ENCODE measurements at regions of chrX and their contacts with region 1.

Region 1: DNA sequence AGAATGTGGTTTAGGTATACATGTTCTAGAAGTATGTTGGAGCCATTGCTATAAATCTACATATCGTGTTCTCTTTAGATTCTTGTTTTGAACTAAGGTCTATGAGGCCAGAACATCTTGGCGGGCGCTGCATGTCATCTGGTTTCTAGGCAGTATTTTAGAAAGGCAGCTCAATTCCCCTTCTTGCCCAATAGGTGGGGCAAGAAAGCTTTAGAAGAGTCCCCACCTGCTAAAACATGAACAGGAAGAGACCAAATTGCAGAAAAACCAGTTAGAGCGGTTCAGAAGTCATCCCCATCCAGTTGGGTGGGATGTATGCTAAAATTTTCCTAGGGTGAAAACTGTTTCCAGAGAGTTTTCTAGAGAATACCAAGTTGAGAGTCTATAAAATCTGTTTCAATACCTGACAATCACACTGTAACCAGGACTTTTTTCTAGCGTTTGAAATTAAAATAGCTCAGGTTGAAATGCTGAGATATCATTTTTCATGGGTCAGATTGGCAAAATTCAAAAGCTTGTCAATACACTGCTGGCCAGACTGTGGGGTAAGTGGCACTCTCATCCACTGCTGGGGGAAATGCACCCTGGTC is 17.5 kb upstream of the SH3KBP1 start:
- DNase-seq: peak; percentile 46
- ATAC-seq: peak; percentile 80
- H3K4me3 Mint-ChIP-seq: no peak overlapping the region
- H3K27ac Mint-ChIP-seq: no peak overlapping the region
- H3K4me1 Mint-ChIP-seq: peaks cover 10% of the 10 kb centered on the region
- H3K27me3 Mint-ChIP-seq: no peaks in the 10 kb centered on the region

Region 2: DNA sequence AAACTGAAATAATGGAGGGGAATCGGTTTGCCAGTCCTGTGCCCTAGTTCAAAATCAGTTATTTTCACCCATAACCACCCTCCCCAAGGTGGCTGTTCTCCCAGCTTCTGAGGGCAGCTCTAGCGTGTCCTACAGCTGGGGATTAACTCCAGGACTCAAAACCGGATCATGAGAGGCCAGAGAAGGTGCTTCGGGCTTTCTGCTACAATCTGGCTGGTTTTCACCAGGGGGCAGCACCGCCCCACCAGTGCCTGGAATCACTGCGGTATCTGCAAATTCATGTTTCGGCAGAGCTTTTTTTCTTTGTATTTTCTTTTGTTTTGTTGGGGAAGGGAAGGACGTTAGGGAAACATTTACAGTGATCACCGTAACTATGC is 532.7 kb before region 1 on chrX:
- CTCF ChIA-PET with region 1: no interaction called
- POLR2A ChIA-PET with region 1: no interaction called
- intact Hi-C with region 1: loop called in 1 of 2 experiments (anchors 5 kb)
- DNase-seq: peak; percentile 79
- ATAC-seq: peak; percentile 85
- H3K4me3 Mint-ChIP-seq: peak overlapping the region; percentile 69
- H3K27ac Mint-ChIP-seq: peak overlapping the region; percentile 81
- H3K4me1 Mint-ChIP-seq: peaks cover 5% of the 10 kb centered on the region
- H3K27me3 Mint-ChIP-seq: no peaks in the 10 kb centered on the region

Region 3: GRCh38 chrX:19915754-19916153 is 10.9 kb after region 1 on chrX:
- CTCF ChIA-PET with region 1: interaction called, 14 read pairs
- POLR2A ChIA-PET with region 1: no interaction called
- intact Hi-C with region 1: no loop called
- DNase-seq: no peak
- ATAC-seq: no peak
- H3K4me3 Mint-ChIP-seq: no peak overlapping the region
- H3K27ac Mint-ChIP-seq: no peak overlapping the region
- H3K4me1 Mint-ChIP-seq: peaks cover 7% of the 10 kb centered on the region
- H3K27me3 Mint-ChIP-seq: no peaks in the 10 kb centered on the region

Region 4: GRCh38 chrX:20066968-20067708 is 162.3 kb after region 1 on chrX:
- CTCF ChIA-PET with region 1: interaction called, 16 read pairs
- POLR2A ChIA-PET with region 1: interaction called, 7 read pairs
- intact Hi-C with region 1: loop called (anchors 1 to 2 kb)
- DNase-seq: peak; percentile 30
- ATAC-seq: peak; percentile 73
- H3K4me3 Mint-ChIP-seq: no peak overlapping the region
- H3K27ac Mint-ChIP-seq: no peak overlapping the region
- H3K4me1 Mint-ChIP-seq: peaks cover 2% of the 10 kb centered on the region
- H3K27me3 Mint-ChIP-seq: no peaks in the 10 kb centered on the region

Region 5: GRCh38 chrX:20116579-20117240 is 211.8 kb after region 1 on chrX and contains the start of gene MAP7D2:
- CTCF ChIA-PET with region 1: no interaction called
- POLR2A ChIA-PET with region 1: no interaction called
- intact Hi-C with region 1: loop called in 1 of 2 experiments (anchors 5 kb)
- DNase-seq: peak; percentile 8
- ATAC-seq: peak; percentile 36
- H3K4me3 Mint-ChIP-seq: peak within 1 kb of the TSS; percentile 35
- H3K27ac Mint-ChIP-seq: no peak within 1 kb of the TSS
- H3K4me1 Mint-ChIP-seq: no peaks in the 10 kb centered on the region
- H3K27me3 Mint-ChIP-seq: peaks cover 15% of the 10 kb centered on the region
- total RNA-seq, gene MAP7D2: 0.44 to 0.59 TPM

Region 6: GRCh38 chrX:20128670-20129069 is 223.8 kb after region 1 on chrX:
- CTCF ChIA-PET with region 1: no interaction called
- POLR2A ChIA-PET with region 1: no interaction called
- intact Hi-C with region 1: loop called in 1 of 2 experiments (anchors 5 kb)
- DNase-seq: no peak
- ATAC-seq: no peak
- H3K4me3 Mint-ChIP-seq: no peak overlapping the region
- H3K27ac Mint-ChIP-seq: no peak overlapping the region
- H3K4me1 Mint-ChIP-seq: no peaks in the 10 kb centered on the region
- H3K27me3 Mint-ChIP-seq: no peaks in the 10 kb centered on the region